Motor neuron (in vitro differentiated cells): ENCODE measurements at regions of chr3 and their contacts with region 1.

Region 1: GRCh38 chr3:16290007-16290826 is 25.2 kb downstream of the OXNAD1 start:
- ATAC-seq: peak in 5 of 8 experiments; percentile 45 to 63 (median 57)
- H3K4me3 ChIP-seq: no peak overlapping the region
- H3K27ac ChIP-seq: no peak overlapping the region
- H3K4me1 ChIP-seq: no peaks in the 10 kb centered on the region

Region 2: GRCh38 chr3:16511681-16512434 is 221.6 kb after region 1 on chr3:
- in situ Hi-C with region 1: loop called in 1 of 9 experiments (anchors 25 kb)
- ATAC-seq: peak in 3 of 8 experiments; percentile 3 to 62 (median 34)
- H3K4me3 ChIP-seq: no peak overlapping the region
- H3K27ac ChIP-seq: no peak overlapping the region
- H3K4me1 ChIP-seq: peaks cover 34 to 51% of the 10 kb centered on the region in 2 donors

Region 3: GRCh38 chr3:16529264-16529663 is 239.0 kb after region 1 on chr3:
- in situ Hi-C with region 1: loop called in 5 of 9 experiments (anchors 25 kb)
- ATAC-seq: no peak
- H3K4me3 ChIP-seq: no peak overlapping the region
- H3K27ac ChIP-seq: no peak overlapping the region
- H3K4me1 ChIP-seq: no peaks in the 10 kb centered on the region

Region 4: DNA sequence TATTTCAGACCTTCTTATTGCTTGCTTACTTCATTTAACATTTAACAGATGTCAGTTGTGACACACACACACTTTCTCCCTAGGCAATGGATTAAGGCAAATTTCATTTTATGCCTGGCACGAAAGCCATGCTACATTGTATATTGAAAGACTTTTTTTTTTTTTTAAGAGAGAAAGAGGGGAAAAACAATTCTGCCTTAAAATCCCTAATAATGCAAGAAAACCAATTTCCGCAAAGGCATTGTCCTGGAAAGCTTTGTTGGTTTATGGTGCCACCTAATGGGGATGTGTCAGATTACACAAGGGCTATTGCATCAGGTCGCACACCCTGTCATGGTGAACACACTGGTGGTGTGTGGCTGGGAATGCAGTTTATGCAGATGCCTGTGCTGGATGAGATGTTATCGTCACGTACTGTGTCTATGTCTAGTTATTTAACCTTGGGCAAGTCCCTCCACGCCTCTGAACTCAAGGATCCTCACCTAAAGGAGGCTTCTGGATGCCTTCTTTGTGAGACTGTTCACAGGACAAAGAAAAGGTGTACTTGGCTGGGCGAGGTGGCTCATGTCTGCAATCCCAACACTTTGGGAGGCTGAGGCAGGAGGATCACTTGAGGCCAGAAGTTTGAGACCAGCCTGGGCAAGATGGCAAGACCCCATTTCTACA is 260.6 kb after region 1 on chr3:
- in situ Hi-C with region 1: loop called in 8 of 9 experiments (anchors 10 to 25 kb)
- ATAC-seq: peak; percentile 76 to 100 (median 98)
- H3K4me3 ChIP-seq: no peak overlapping the region
- H3K27ac ChIP-seq: no peak overlapping the region
- H3K4me1 ChIP-seq: peaks cover 8 to 9% of the 10 kb centered on the region in 2 donors